ENCODE measurements at regions of chr18 and their contacts with region 1.

Region 1: GRCh38 chr18:8754995-8755955 is 49.9 kb downstream of the MTCL1 start:
- DNase-seq: peak; percentile 95
- H3K4me3 ChIP-seq: peak overlapping the region; percentile 47
- H3K27ac ChIP-seq: peak overlapping the region; percentile 96
- H3K4me1 ChIP-seq: peaks cover 80% of the 10 kb centered on the region
- CTCF ChIP-seq: no peak

Region 2: DNA sequence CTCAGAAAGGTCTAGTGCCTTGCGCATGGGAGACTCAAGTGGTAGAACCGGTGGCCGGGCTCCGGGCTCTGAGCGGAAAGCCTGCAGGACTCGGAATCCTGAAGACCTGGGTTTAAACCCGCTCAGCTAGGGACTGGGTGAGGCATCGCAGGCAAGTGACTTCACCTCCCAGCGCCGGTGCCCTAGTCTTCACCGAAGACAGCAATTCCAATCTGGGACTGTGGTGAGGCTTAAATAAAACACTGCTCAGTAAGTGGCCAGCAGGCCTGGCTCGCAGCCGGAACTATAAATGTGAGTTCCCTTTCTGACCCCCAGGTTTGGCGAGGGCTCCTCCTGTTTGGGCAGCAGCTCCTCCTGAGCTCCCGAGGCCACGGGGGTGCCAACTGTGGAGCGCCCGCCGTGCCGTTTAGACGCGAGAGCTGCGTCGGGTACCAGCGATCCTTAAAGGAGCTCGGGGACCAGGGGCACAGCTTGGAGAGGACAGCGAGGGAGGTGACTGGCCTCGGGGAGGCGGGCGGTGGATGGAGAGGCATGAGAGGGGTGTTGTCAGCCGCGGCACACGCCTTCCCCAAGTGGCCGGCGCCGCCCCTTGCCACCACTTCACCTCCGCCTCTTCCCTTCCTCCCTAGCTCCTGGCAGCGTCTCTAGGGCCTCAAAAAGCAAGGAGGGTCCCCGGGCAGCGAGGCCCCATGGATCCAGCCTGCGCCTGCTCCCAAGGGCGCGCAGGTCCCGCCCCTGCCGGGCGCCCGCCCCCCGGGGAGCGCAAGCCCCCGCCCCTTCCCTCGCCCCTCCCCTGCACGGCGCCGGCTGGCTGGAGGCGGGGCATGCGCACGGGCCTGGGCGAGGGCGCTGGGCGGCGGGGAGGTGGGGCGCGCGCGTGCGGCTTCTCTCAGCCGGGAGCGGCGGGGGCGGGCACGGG is 50.7 kb before region 1 on chr18:
- CTCF ChIA-PET with region 1: interaction called, 3 read pairs
- POLR2A ChIA-PET with region 1: interaction called, 5 read pairs
- intact Hi-C with region 1: loop called (anchors 1 kb)
- DNase-seq: peak; percentile 91
- H3K4me3 ChIP-seq: peak overlapping the region; percentile 67
- H3K27ac ChIP-seq: no peak overlapping the region
- H3K4me1 ChIP-seq: peaks cover 24% of the 10 kb centered on the region
- CTCF ChIP-seq: no peak

Region 3: GRCh38 chr18:8730080-8730827 is 25.0 kb before region 1 on chr18:
- CTCF ChIA-PET with region 1: no interaction called
- POLR2A ChIA-PET with region 1: interaction called, 7 read pairs
- intact Hi-C with region 1: loop called (anchors 1 kb)
- DNase-seq: no peak
- H3K4me3 ChIP-seq: no peak overlapping the region
- H3K27ac ChIP-seq: no peak overlapping the region
- H3K4me1 ChIP-seq: peaks cover 41% of the 10 kb centered on the region
- CTCF ChIP-seq: no peak

Region 4: GRCh38 chr18:10525371-10526210 is 1770.3 kb after region 1 on chr18 and contains the start of gene NAPG:
- CTCF ChIA-PET with region 1: no interaction called
- POLR2A ChIA-PET with region 1: no interaction called
- intact Hi-C with region 1: loop called (anchors 5 kb)
- DNase-seq: peak; percentile 95
- H3K4me3 ChIP-seq: peak within 1 kb of the TSS; percentile 81
- H3K27ac ChIP-seq: peak within 1 kb of the TSS; percentile 63
- H3K4me1 ChIP-seq: peaks cover 43% of the 10 kb centered on the region
- CTCF ChIP-seq: no peak
- total RNA-seq, gene NAPG: 34.6 and 41.4 TPM in 2 replicates

Measured in OCI-LY7 (cell line).